Activated CD4-positive, alpha-beta T cell treated with anti-CD3 and anti-CD28 coated beads for 36 hours (primary cell): ENCODE measurements at regions of chr19 and their contacts with region 1.

Region 1: DNA sequence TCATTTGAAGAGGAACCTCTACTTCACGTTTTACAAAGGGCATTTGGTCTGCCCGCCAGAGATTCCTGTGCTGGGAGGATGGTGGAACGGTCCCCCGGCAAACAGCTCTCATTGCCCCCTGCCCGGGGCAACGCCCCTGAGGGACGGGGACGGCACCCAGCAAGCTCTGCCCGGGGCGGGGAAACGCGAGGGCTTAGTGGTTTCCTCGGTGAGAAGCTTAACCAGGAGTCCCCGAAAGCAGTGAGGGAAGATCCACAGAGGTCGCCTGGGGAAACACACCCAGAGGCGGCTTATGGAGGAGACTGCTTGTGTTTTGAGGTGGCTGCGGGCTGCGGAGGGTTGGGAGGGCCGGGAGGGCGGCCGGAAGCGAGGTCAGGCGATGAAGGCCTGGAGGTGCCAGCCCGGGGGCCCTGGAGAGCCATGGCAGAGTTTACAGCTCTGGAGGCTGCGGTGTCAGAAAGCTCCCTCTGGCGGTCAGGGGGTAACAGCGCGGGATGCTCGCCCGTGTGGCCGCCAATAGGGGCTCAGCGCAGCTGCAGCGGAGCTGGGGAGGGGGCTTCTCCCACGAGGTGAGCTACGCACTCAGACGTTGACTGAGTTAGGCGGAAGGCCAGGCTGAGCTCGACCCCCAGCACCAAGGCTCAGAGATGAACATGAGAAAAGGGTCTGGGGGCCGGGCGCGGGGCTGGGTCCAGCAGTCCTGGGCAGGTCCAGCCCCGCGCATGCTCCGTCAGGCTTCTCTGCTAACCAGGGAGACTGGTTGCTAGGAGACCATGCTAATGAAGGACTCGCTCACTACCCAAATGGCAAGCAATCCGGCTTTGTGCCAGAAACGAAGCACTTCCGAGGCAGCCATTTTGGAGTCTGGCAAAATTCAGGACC is 652 bp upstream of the TPGS1 start:
- DNase-seq: peak; percentile 97
- ATAC-seq: peak; percentile 72
- H3K4me3 Mint-ChIP-seq: peak overlapping the region; percentile 95
- H3K27ac Mint-ChIP-seq: peak overlapping the region; percentile 100
- H3K4me1 Mint-ChIP-seq: peaks cover 41% of the 10 kb centered on the region
- H3K27me3 Mint-ChIP-seq: no peaks in the 10 kb centered on the region

Region 2: GRCh38 chr19:246541-246940 is 260.1 kb before region 1 on chr19:
- CTCF ChIA-PET with region 1: interaction called, 10 read pairs
- POLR2A ChIA-PET with region 1: no interaction called
- intact Hi-C with region 1: no loop called
- DNase-seq: peak; percentile 14
- ATAC-seq: no peak
- H3K4me3 Mint-ChIP-seq: no peak overlapping the region
- H3K27ac Mint-ChIP-seq: no peak overlapping the region
- H3K4me1 Mint-ChIP-seq: no peaks in the 10 kb centered on the region
- H3K27me3 Mint-ChIP-seq: no peaks in the 10 kb centered on the region

Region 3: GRCh38 chr19:344625-345319 is 161.9 kb before region 1 on chr19 and contains the start of gene MIER2:
- CTCF ChIA-PET with region 1: interaction called, 6 read pairs
- POLR2A ChIA-PET with region 1: no interaction called
- intact Hi-C with region 1: loop called in 1 of 2 experiments (anchors 1 kb)
- DNase-seq: peak; percentile 94
- ATAC-seq: peak; percentile 94
- H3K4me3 Mint-ChIP-seq: peak within 1 kb of the TSS; percentile 79
- H3K27ac Mint-ChIP-seq: peak within 1 kb of the TSS; percentile 77
- H3K4me1 Mint-ChIP-seq: peaks cover 44% of the 10 kb centered on the region
- H3K27me3 Mint-ChIP-seq: peaks cover 7% of the 10 kb centered on the region
- total RNA-seq, gene MIER2: 21.2 to 24.6 TPM

Region 4: DNA sequence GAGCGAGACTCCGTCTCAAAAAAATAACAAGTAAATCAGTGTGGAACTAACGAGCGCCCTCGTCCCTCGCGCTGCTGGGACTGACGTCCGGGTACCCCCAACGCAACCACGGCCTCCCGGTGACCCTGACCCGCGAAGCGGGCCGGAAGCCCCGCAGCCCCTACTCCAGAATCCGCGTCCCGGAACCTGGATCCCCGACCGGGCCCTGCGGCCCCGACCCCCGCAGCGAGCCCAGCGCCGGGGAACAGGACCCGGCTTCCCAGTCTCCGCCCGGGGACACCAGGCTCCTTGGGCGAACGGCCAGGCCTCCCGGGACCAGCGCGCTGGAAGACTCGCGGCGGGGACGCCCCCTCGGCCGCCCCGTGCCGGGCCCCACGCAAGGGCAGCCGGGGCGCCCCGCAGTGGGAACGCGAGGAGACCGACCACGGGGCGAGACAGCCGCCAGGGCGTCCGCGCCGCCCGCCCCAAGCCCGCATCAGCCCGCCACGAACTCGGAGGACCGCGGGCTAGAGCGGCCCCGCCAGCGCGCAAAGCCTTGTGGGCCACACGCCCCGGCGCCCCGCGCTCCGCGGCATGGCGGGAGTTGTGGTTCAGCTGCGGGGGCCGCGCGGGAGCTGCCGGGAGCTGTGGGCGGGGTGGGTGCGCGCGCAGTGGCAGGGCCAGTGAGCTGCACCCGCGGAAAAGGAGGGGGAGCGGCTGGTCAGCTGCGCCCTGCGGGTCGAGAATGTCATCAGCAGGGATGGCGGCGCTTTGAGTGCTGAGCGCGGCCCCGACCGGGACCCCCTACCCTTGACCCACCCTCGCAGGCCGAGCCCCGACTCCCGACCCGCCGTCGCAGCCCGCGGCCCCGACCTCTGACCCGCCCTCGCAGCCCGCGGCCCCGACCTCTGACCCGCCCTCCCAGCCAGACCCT is 17.9 kb before region 1 on chr19:
- CTCF ChIA-PET with region 1: interaction called, 14 read pairs
- POLR2A ChIA-PET with region 1: interaction called, 3 read pairs
- intact Hi-C with region 1: loop called (anchors 1 to 2 kb)
- DNase-seq: peak; percentile 93
- ATAC-seq: peak; percentile 91
- H3K4me3 Mint-ChIP-seq: peak overlapping the region; percentile 71
- H3K27ac Mint-ChIP-seq: peak overlapping the region; percentile 75
- H3K4me1 Mint-ChIP-seq: peaks cover 2% of the 10 kb centered on the region
- H3K27me3 Mint-ChIP-seq: peaks cover 10% of the 10 kb centered on the region

Region 5: DNA sequence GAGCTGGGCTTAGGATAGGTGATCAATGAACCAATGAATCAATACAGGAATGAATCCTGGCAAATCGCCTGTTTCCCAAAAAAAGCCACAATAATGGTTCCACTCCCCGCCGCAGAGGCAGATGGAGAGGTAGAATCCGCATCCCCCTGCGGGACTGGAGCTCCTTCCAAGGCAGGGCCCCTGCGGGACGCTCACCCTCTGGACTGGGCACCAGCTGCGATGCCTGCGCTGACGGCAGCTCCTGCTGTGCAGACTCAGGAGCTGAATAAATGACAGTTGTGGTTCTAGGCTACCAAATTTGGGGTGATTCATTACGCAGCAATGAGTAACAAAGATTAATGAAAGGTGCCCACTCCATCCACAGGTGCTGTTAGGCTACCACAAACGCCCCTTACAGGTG is 16.1 kb after region 1 on chr19:
- CTCF ChIA-PET with region 1: interaction called, 30 read pairs
- POLR2A ChIA-PET with region 1: no interaction called
- intact Hi-C with region 1: no loop called
- DNase-seq: no peak
- ATAC-seq: no peak
- H3K4me3 Mint-ChIP-seq: no peak overlapping the region
- H3K27ac Mint-ChIP-seq: no peak overlapping the region
- H3K4me1 Mint-ChIP-seq: no peaks in the 10 kb centered on the region
- H3K27me3 Mint-ChIP-seq: peaks cover 1% of the 10 kb centered on the region

Region 6: GRCh38 chr19:572140-572742 is 65.6 kb after region 1 on chr19 and contains the start of gene BSG:
- CTCF ChIA-PET with region 1: interaction called, 7 read pairs
- POLR2A ChIA-PET with region 1: interaction called, 3 read pairs
- intact Hi-C with region 1: loop called (anchors 1 to 2 kb)
- DNase-seq: peak; percentile 99
- ATAC-seq: peak; percentile 87
- H3K4me3 Mint-ChIP-seq: peak within 1 kb of the TSS; percentile 90
- H3K27ac Mint-ChIP-seq: peak within 1 kb of the TSS; percentile 95
- H3K4me1 Mint-ChIP-seq: peaks cover 36% of the 10 kb centered on the region
- H3K27me3 Mint-ChIP-seq: no peaks in the 10 kb centered on the region
- total RNA-seq, gene BSG: 165 to 175 TPM

Region 7: DNA sequence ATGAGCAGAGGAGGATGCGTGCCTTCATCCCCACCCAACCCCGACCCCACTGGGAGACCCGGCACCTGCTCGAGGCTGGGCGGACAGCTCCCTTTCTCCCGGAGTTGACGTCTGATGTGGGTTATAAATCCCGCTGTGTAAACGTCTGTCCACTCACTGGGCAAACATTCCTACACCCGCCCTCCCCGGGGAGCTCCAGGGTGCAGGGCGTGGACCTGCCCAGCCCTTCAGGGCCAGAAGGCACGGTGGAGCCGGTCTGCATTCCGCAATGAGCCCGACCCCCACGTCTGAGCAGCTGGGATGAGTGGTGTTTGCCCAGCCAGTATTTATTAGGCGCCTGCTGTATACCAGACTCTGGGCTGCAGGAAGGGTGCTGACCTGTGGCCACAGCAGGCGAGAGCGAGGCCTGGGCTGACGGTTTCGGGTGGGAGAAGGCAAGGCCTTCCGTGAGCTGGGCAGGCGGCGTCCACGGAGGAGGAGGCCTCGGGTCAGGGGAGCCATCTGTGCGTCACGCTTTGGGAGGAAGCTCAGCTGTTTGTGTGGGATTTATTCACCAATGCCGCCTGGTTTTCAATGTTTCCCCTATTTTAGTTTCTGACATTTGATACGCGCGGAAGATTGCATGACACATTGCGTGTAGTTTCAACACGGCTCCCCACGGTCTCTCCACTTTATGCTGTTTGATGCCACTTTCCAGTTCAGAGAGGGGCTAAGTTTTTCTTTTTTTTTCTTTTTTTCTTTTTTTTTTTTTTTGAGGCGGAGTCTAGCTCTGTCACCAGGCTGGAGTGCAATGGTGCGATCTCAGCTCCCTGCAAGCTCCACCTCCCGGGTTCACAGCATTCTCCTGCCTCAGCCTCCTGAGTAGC is 246.2 kb after region 1 on chr19:
- CTCF ChIA-PET with region 1: no interaction called
- POLR2A ChIA-PET with region 1: no interaction called
- intact Hi-C with region 1: no loop called
- DNase-seq: no peak
- ATAC-seq: no peak
- H3K4me3 Mint-ChIP-seq: no peak overlapping the region
- H3K27ac Mint-ChIP-seq: no peak overlapping the region
- H3K4me1 Mint-ChIP-seq: peaks cover 3% of the 10 kb centered on the region
- H3K27me3 Mint-ChIP-seq: no peaks in the 10 kb centered on the region

Region 8: GRCh38 chr19:763181-763580 is 256.5 kb after region 1 on chr19:
- CTCF ChIA-PET with region 1: no interaction called
- POLR2A ChIA-PET with region 1: no interaction called
- intact Hi-C with region 1: no loop called
- DNase-seq: no peak
- ATAC-seq: no peak
- H3K4me3 Mint-ChIP-seq: no peak overlapping the region
- H3K27ac Mint-ChIP-seq: no peak overlapping the region
- H3K4me1 Mint-ChIP-seq: no peaks in the 10 kb centered on the region
- H3K27me3 Mint-ChIP-seq: no peaks in the 10 kb centered on the region